ENCODE measurements at regions of chr1 and their contacts with region 1.

Region 1: DNA sequence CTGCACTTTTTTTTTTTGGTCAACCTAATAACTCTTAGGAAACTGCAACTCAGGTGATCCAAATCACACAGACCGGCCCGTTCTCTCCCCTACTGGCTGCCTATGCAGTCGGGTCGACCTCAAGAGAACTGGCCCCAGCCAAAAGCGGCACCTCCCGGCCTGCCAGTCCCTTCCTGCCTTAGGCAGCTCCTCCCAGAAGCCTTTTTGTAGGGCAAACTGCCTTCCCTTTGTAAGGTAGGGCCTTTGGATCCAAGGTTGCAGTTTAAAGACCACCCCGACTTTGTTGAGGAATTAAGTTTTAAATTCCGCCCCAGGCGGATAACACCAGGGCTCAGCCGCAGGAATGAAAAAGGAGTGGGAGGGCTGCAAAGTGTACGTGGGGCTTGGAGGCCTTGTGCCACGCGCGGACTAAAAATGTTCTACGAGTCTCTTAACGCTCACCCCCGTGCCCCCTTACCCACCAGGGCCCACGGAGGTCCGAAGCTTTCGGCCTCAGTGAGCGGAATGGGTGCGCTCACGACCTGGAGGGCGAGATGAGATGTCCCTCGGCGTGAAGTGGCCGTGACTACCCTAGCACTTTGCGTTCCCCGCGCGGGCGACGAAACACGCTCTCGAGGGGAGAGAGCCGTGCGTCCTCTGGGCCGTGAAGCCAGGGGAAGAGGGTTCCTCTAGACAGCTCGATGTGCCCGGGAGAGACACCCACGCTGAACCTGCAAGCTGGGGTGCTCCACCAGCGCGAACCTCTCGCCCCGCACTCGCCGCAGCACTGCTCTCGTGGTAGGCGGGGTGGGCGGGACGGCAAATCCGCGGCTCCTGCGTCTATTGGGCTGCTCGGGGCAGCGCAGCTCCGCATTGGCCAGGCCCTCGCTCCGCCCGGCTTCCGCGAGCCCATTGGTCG is 489 bp upstream of the ST3GAL3 start:
- DNase-seq: peak; percentile 91
- H3K4me3 Mint-ChIP-seq: peak overlapping the region; percentile 88
- H3K27ac Mint-ChIP-seq: peak overlapping the region; percentile 76
- H3K4me1 Mint-ChIP-seq: peaks cover 46% of the 10 kb centered on the region
- H3K27me3 Mint-ChIP-seq: no peaks in the 10 kb centered on the region

Region 2: DNA sequence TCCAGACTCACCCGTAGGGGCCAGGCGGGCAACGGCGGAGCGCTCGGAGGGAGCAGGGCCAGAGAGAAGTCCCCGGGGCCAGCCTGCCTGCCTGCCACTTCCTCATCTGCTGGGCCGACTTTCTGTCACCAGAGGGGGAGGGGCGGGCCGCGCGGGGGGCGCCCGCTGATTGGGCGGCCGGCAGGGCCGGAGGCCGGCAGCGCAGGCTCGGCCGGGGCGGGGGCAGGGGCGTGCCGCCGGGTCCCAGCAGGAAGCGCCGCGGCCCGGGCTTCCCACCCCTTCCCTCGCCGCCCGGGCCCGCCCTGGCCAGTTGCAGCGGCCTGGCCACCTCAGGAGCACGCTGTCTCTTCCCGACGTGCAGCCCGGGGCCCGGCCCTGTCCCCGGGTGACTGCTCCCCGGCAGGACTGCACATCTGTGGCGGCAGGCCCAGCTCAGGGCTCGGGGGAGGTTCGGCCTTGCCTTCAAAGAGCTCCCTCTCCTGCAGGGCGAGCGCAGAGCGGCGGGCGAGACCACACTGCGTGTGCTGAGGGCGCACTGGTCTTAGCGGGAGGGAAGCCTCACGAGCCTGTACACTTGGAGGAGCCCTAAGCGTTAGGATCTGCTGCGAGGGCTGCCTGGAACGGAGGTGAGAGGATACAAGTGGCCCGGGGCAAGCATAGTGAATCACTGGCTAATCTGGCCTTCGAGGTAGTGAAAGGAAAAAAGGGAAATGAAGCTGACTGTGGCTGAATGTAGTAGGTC is 338.8 kb before region 1 on chr1 and contains the start of gene ELOVL1:
- intact Hi-C with region 1: loop called (anchors 10 kb)
- DNase-seq: peak; percentile 85
- H3K4me3 Mint-ChIP-seq: peak within 1 kb of the TSS; percentile 92
- H3K27ac Mint-ChIP-seq: peak within 1 kb of the TSS; percentile 86
- H3K4me1 Mint-ChIP-seq: peaks cover 43% of the 10 kb centered on the region
- H3K27me3 Mint-ChIP-seq: no peaks in the 10 kb centered on the region
- total RNA-seq, gene ELOVL1: 81.8 and 85.7 TPM in 2 replicates

Region 3: DNA sequence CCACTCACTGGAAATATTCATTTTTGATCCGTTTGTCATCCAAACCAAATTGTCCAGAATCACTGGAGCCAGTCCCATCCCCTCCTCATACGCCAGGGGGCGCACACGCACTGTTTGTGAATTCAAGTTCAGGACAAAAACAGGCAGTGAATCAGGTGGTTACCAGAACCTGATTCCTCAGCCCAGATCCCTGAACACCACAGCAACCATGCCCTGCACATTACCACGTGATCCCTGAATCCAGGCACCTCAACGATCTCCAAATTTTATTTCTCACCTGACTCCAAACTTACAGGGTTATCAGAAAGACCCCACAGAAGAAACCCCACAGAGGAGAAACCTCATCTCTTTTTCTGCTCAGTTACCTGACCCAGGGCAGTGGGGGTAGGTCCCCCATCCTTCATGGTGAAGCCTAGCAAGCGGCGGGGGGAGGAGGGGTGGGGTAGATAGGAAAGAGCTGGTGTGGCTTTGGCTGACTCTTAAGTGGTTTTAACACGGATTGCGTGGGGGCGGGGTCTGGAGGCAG is 177.6 kb before region 1 on chr1:
- intact Hi-C with region 1: loop called (anchors 1 kb)
- DNase-seq: peak; percentile 64
- H3K4me3 Mint-ChIP-seq: peak overlapping the region; percentile 34
- H3K27ac Mint-ChIP-seq: no peak overlapping the region
- H3K4me1 Mint-ChIP-seq: peaks cover 21% of the 10 kb centered on the region
- H3K27me3 Mint-ChIP-seq: peaks cover 41% of the 10 kb centered on the region

Region 4: GRCh38 chr1:43650310-43651085 is 56.3 kb before region 1 on chr1:
- intact Hi-C with region 1: loop called (anchors 1 kb)
- DNase-seq: peak; percentile 89
- H3K4me3 Mint-ChIP-seq: peak overlapping the region; percentile 98
- H3K27ac Mint-ChIP-seq: peak overlapping the region; percentile 98
- H3K4me1 Mint-ChIP-seq: peaks cover 27% of the 10 kb centered on the region
- H3K27me3 Mint-ChIP-seq: peaks cover under 1% of the 10 kb centered on the region

Region 5: DNA sequence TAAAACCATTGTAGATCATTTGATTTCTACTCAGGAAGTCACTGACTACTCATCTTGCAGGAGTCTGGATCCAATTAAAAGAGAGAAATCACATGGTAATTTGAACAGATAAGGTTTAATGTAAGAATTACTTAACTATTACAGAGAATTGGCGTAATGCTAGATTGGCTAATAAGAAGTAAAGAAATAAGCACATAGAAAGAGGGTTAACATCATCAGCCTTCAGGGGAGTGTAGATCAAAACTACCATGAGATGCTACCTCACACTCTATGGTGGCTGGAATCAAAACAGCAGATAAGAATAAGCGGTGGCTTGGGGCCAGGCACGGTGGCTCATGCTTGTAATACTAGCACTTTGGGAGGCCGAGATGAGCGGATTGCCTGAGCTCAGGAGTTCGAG is 12.2 kb after region 1 on chr1:
- intact Hi-C with region 1: no loop called
- DNase-seq: no peak
- H3K4me3 Mint-ChIP-seq: no peak overlapping the region
- H3K27ac Mint-ChIP-seq: no peak overlapping the region
- H3K4me1 Mint-ChIP-seq: no peaks in the 10 kb centered on the region
- H3K27me3 Mint-ChIP-seq: no peaks in the 10 kb centered on the region

Region 6: DNA sequence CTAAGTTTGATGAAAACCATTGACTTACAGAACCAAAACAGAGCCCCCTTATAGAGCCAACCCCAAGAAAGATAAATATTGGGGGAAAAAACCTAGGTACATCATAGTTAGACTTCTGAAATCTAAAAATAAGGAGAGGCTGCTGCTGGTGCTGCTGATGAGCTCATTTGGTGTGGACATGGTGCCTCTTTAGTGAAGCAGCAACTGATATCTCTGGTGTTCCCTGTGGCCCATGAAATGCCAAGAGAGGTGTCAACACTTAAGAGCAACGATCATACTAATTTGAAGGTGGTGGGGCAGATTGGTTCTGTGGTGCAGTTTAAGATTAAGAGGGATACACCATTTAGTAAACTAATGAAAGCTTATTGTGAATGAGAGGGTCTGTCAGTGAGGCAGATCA is 36.4 kb after region 1 on chr1:
- intact Hi-C with region 1: no loop called
- DNase-seq: no peak
- H3K4me3 Mint-ChIP-seq: no peak overlapping the region
- H3K27ac Mint-ChIP-seq: no peak overlapping the region
- H3K4me1 Mint-ChIP-seq: no peaks in the 10 kb centered on the region
- H3K27me3 Mint-ChIP-seq: no peaks in the 10 kb centered on the region

Region 7: GRCh38 chr1:43974443-43975248 is 267.8 kb after region 1 on chr1 and contains the start of gene ATP6V0B:
- intact Hi-C with region 1: loop called (anchors 1 kb)
- DNase-seq: peak; percentile 94
- H3K4me3 Mint-ChIP-seq: peak within 1 kb of the TSS; percentile 85
- H3K27ac Mint-ChIP-seq: peak within 1 kb of the TSS; percentile 89
- H3K4me1 Mint-ChIP-seq: peaks cover 60% of the 10 kb centered on the region
- H3K27me3 Mint-ChIP-seq: peaks cover 1% of the 10 kb centered on the region
- total RNA-seq, gene ATP6V0B: 187 and 195 TPM in 2 replicates

Region 8: GRCh38 chr1:44029906-44030604 is 323.2 kb after region 1 on chr1:
- intact Hi-C with region 1: loop called (anchors 1 kb)
- DNase-seq: peak; percentile 86
- H3K4me3 Mint-ChIP-seq: peak overlapping the region; percentile 90
- H3K27ac Mint-ChIP-seq: peak overlapping the region; percentile 92
- H3K4me1 Mint-ChIP-seq: peaks cover 30% of the 10 kb centered on the region
- H3K27me3 Mint-ChIP-seq: peaks cover 2% of the 10 kb centered on the region

Region 9: DNA sequence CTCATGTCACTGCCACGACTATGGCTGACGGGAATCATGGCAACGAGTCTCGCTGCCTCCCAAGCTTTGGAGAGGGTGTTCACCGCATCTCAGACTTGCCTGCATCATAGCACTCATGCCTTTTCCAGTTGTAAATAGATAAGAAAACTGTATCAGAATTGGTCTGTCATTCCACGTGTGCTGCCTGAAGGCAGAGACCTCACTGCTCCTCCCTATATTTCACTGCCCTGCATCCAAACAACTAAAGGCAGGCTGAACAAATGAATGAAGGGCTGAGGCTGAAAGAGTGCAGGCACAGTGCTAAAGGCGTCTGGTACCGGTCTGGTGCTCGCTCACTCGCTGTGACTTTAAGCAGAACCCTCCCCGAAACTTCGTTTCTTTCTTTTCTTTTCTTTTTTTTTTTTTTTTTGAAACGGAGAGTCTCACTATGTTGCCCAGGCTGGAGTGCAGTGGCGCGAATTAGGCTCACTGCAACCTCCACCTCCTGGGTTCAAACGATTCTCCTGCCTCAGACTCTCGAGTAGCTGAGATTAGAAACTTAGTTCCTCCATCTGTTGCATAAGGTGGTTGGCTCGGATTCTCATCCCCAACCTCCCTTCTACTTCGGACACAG is 1279.0 kb after region 1 on chr1:
- intact Hi-C with region 1: loop called (anchors 5 kb)
- DNase-seq: no peak
- H3K4me3 Mint-ChIP-seq: peak overlapping the region; percentile 100
- H3K27ac Mint-ChIP-seq: peak overlapping the region; percentile 94
- H3K4me1 Mint-ChIP-seq: peaks cover 21% of the 10 kb centered on the region
- H3K27me3 Mint-ChIP-seq: peaks cover 2% of the 10 kb centered on the region

Measured in activated T-helper 1 cell treated with anti-CD3 and anti-CD28 coated beads, Interleukin-12 subunit alpha, Interleukin-12 subunit beta, Interleukin-2, Interleukin-4 antibody, amounts not matched to agents 30 ng/mL and 10 ng/mL and 1 ng/mL, durations not matched to agents 14 hours and 24 hours and 36 hours (primary cell).